ENCODE measurements at regions of chr2 and their contacts with region 1.

Region 1: GRCh38 chr2:10434886-10435819 is 13.0 kb downstream of the ODC1 start:
- DNase-seq: peak; percentile 84
- ATAC-seq: peak; percentile 81
- H3K4me3 Mint-ChIP-seq: no peak overlapping the region
- H3K27ac Mint-ChIP-seq: no peak overlapping the region
- H3K4me1 Mint-ChIP-seq: no peaks in the 10 kb centered on the region
- H3K27me3 Mint-ChIP-seq: no peaks in the 10 kb centered on the region; the same call in 1 of the 2 replicates
- CTCF ChIP-seq: peak; percentile 87

Region 2: DNA sequence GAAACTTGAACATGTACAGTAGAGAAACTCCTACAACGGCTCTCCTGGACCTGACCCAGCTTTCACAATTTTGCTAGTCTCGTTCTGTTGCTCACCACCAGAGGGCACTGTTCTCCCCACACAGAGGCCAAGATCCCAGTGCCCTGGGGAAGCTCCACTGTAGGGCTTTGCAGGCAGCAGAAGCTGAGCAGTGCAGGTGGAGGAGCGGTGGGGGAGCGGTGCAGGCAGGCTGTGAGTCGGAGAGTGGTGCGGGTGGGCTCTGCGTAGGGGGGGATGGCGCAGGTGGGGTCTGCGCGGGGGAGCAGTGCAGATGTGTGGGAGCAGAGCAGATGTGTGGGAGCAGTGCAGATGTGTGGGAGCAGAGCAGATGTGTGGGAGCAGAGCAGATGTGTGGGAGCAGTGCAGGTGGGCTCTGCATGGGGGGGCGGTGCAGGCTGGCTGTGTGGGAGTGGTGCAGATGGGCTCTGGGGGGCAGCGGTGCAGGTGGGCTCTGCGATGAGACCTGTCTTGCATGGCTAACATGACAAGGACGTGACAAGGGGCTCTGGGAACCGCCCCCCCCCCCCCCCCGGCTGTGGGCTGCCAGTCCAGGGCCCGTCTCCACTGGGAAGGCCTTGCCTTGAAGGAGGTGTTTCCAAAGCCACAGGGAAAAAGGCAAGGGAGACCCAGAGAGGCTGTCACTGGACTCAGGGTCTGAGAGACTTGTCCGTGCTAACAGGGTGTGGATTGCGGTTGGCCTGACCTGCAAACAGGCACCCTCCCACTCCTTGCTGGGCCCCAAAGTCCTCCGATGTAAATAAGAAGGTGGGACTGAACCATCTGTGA is 362.3 kb before region 1 on chr2:
- CTCF ChIA-PET with region 1: interaction called, 52 read pairs
- POLR2A ChIA-PET with region 1: no interaction called
- DNase-seq: peak; percentile 83
- ATAC-seq: peak; percentile 97
- H3K4me3 Mint-ChIP-seq: no peak overlapping the region
- H3K27ac Mint-ChIP-seq: no peak overlapping the region
- H3K4me1 Mint-ChIP-seq: peaks cover 18% of the 10 kb centered on the region
- H3K27me3 Mint-ChIP-seq: peaks cover 14% of the 10 kb centered on the region
- CTCF ChIP-seq: peak; percentile 89

Region 3: GRCh38 chr2:10135296-10136089 is 299.7 kb before region 1 on chr2:
- CTCF ChIA-PET with region 1: interaction called, 81 read pairs
- POLR2A ChIA-PET with region 1: interaction called, 3 read pairs
- DNase-seq: no peak
- ATAC-seq: no peak
- H3K4me3 Mint-ChIP-seq: no peak overlapping the region
- H3K27ac Mint-ChIP-seq: peak overlapping the region; percentile 64; the same call in 1 of the 2 replicates
- H3K4me1 Mint-ChIP-seq: peaks cover 39% of the 10 kb centered on the region
- H3K27me3 Mint-ChIP-seq: no peaks in the 10 kb centered on the region
- CTCF ChIP-seq: no peak

Region 4: GRCh38 chr2:10202131-10202665 is 233.0 kb before region 1 on chr2:
- CTCF ChIA-PET with region 1: no interaction called
- POLR2A ChIA-PET with region 1: no interaction called
- DNase-seq: no peak
- ATAC-seq: no peak
- H3K4me3 Mint-ChIP-seq: no peak overlapping the region
- H3K27ac Mint-ChIP-seq: no peak overlapping the region
- H3K4me1 Mint-ChIP-seq: no peaks in the 10 kb centered on the region
- H3K27me3 Mint-ChIP-seq: peaks cover 7% of the 10 kb centered on the region; the same call in 1 of the 2 replicates
- CTCF ChIP-seq: no peak

Region 5: DNA sequence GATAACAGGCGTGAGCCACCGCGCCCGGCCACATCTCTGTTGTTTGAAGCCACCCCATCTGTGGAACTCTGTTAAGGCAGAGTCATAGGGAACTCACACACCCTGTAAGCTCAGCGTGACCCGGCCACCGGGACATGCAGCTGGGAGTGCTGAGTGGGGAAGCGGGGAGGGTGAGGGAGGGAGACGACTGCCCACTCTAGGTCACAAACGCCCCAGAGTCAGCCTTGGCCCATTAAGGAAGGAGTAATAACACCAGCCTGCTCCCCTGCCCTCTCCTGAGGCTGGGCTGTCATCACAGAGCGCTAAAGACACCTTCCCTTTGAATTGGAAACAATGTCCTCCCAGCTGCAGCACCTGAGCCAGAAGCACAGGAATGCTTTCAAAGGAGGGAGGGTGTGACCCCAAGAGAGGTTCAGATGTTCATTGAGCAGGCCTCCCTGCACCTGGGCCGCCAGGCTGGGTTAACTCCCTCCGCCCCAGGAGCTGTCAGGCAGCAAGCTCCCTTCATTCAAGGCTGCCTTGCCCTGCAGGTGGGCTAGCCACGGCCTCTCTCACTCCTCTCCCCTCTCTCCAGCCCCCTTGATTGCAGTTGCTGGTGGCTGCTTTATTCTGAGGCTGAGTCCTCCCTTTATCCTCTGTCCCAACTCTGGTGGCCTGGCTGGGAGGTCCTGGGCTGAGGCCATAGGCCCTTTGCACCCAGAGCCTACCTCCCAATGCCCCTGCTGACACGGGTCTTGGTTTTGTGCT is 209.7 kb before region 1 on chr2:
- CTCF ChIA-PET with region 1: interaction called, 19 read pairs
- POLR2A ChIA-PET with region 1: no interaction called
- DNase-seq: peak; percentile 47
- ATAC-seq: peak; percentile 68
- H3K4me3 Mint-ChIP-seq: no peak overlapping the region
- H3K27ac Mint-ChIP-seq: no peak overlapping the region
- H3K4me1 Mint-ChIP-seq: 0 out of 2 replicates have a peak, but pooled peaks cover 6% of the 10 kb centered on the region
- H3K27me3 Mint-ChIP-seq: no peaks in the 10 kb centered on the region
- CTCF ChIP-seq: no peak

Region 6: GRCh38 chr2:10267551-10268465 is 167.3 kb before region 1 on chr2:
- CTCF ChIA-PET with region 1: interaction called, 32 read pairs
- POLR2A ChIA-PET with region 1: no interaction called
- DNase-seq: peak; percentile 37
- ATAC-seq: peak; percentile 68
- H3K4me3 Mint-ChIP-seq: no peak overlapping the region
- H3K27ac Mint-ChIP-seq: no peak overlapping the region
- H3K4me1 Mint-ChIP-seq: no peaks in the 10 kb centered on the region
- H3K27me3 Mint-ChIP-seq: no peaks in the 10 kb centered on the region
- CTCF ChIP-seq: no peak

Region 7: DNA sequence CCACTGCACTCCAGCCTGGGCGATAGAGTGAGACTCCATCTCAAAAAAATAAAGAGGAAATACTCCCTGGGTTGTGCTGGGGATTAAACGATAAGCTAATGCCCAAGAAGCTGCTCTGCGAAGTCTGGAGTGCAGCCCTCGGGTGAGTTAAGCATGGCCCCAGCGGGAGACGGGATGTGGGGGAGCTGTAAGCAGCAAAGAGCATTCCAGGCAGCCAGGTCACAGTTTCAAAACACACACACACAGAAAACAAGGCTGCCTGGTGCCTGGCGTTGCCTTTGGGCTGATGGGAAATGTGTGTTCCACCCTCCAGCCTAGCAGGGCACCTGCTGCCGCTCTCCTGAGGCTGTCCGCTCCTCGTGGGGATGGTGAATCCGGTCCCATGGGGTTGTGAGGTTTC is 11.1 kb before region 1 on chr2:
- CTCF ChIA-PET with region 1: interaction called, 16 read pairs
- POLR2A ChIA-PET with region 1: no interaction called
- DNase-seq: no peak
- ATAC-seq: 0 out of 2 replicates have a peak, but pooled peaks have one; percentile 28
- H3K4me3 Mint-ChIP-seq: no peak overlapping the region
- H3K27ac Mint-ChIP-seq: no peak overlapping the region
- H3K4me1 Mint-ChIP-seq: no peaks in the 10 kb centered on the region
- H3K27me3 Mint-ChIP-seq: no peaks in the 10 kb centered on the region
- CTCF ChIP-seq: no peak